ENCODE measurements at regions of chr13 and their contacts with region 1.

Region 1: DNA sequence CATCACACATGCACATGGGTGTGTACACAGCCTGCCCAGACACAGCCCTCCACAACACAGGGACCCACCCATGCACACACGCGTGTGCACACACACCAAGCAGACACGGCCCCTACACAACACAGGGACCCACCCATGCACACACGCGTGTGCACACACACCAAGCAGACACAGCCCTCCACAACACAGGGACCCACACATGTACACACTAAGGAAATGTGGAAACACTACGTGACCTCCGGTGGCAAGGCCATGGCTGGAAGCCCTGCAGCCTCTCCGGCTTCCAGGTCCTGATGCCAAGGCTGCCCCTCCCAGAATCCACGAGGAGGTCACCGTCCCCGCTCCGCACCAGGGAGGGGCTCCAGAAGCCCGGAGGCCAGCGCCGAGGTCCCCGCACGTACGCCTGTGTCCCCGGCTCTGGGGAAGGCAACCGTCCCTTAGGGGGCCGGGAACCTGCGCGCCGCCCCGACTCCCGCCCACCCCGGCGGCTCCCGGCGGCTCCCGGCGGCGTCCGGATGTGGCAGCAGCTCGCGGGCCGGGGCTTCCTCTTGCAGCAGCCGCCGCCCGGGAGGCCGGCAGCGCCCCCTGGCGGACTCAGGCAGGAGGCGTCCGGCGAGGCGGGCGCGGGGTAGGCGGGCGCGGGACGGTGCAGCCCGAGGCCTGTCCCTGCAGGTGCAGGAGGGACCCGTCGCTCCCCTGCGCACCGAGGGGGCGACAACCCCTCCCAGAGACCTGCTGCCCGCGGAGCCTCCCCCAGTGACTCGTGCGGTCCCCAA is 29.8 kb upstream of the GRTP1 start:
- DNase-seq: peak; percentile 81 to 92 (median 84)
- ATAC-seq: peak; percentile 44 to 89 (median 77)
- H3K4me3 ChIP-seq: peak overlapping the region; percentile 53 to 93 (median 80)
- H3K27ac ChIP-seq: peak overlapping the region in 11 of 12 donors; percentile 31 to 85 (median 75)
- H3K4me1 ChIP-seq: peaks cover 0 to 21% (median 9%) of the 10 kb centered on the region in 12 donors
- H3K27me3 ChIP-seq: no peaks in the 10 kb centered on the region
- CTCF ChIP-seq: peak; percentile 66 to 98 (median 90)
- POLR2A ChIP-seq: peak in 1 of 2 donors; percentile 36

Region 2: GRCh38 chr13:113029487-113030258 is 364.1 kb before region 1 on chr13:
- intact Hi-C with region 1: loop called in 4 of 10 experiments (anchors 10 kb)
- DNase-seq: no peak
- ATAC-seq: peak in 2 of 4 donors; percentile 27 to 60
- H3K4me3 ChIP-seq: no peak overlapping the region
- H3K27ac ChIP-seq: no peak overlapping the region
- H3K4me1 ChIP-seq: peaks cover 0 to 10% (median under 1%) of the 10 kb centered on the region in 12 donors
- H3K27me3 ChIP-seq: peaks cover 0 to 5% (median 0%) of the 10 kb centered on the region in 9 donors
- CTCF ChIP-seq: peak; percentile 61 to 87 (median 76)
- POLR2A ChIP-seq: no peak

Region 3: DNA sequence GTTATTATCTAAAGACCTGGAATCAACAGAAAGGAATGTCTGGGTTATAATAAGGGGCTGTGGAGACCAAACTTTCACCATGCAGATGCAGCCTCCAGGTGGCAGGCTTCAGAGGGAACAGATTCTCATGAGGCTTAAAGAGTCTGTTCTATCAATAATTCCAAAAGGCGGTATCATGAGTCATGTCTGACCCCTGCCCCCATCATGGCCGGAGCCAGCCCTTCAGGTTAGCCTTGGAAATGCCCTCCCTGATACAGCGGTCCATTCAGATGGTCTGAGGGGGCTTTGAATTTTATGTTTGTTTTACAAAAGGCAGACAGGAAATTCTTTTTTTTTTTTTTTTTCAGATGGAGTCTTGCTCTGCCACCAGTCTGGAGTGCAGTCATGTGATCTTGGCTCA is 118.4 kb before region 1 on chr13:
- intact Hi-C with region 1: loop called in 7 of 10 experiments (anchors 2 to 10 kb)
- DNase-seq: peak in 1 of 5 donors; percentile 36
- ATAC-seq: peak in 3 of 4 donors; percentile 39 to 72 (median 50)
- H3K4me3 ChIP-seq: no peak overlapping the region
- H3K27ac ChIP-seq: no peak overlapping the region
- H3K4me1 ChIP-seq: peaks cover 0 to 35% (median 0%) of the 10 kb centered on the region in 12 donors
- H3K27me3 ChIP-seq: no peaks in the 10 kb centered on the region
- CTCF ChIP-seq: peak in 10 of 12 donors; percentile 20 to 55 (median 42)
- POLR2A ChIP-seq: no peak

Region 4: DNA sequence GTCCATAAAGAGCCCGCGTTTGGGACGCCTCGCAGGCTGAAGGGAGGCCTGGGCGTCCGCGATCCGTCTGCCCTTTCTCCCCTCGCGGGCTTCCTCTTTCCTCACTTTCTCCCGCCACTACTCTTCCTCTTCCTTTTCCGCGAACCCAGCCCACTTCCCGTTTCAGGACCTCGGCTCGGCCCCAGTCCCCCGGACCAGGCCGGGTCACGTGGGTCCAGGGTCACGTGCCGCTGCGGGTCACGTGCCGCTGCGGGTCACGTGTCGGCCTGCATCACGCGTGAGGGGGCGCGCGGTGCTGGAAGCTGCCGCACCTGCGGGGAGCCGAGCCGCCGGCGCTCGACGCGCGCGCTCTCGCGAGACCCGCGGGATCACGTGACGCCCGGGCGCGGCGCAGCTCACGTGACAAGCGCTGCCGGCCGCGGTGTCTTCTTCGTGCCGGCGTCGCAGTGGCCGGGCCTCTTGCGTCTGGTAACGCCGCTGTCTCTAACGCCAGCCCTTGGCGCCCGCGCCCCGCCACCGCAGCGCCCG is 96.8 kb before region 1 on chr13 and contains the start of gene LAMP1:
- intact Hi-C with region 1: loop called in 3 of 10 experiments (anchors 5 to 10 kb)
- DNase-seq: peak; percentile 97 to 100 (median 99)
- ATAC-seq: peak; percentile 91 to 95 (median 94)
- H3K4me3 ChIP-seq: peak within 1 kb of the TSS; percentile 77 to 98 (median 88)
- H3K27ac ChIP-seq: peak within 1 kb of the TSS; percentile 53 to 95 (median 92)
- H3K4me1 ChIP-seq: peaks cover 0 to 53% (median 23%) of the 10 kb centered on the region in 12 donors
- H3K27me3 ChIP-seq: peaks cover 0 to 3% (median 0%) of the 10 kb centered on the region in 9 donors
- CTCF ChIP-seq: peak in 1 of 12 donors; percentile 12
- POLR2A ChIP-seq: peak in 1 of 2 donors; percentile 74
- total RNA-seq, gene LAMP1: 77.5 to 214 (median 101) TPM

Region 5: DNA sequence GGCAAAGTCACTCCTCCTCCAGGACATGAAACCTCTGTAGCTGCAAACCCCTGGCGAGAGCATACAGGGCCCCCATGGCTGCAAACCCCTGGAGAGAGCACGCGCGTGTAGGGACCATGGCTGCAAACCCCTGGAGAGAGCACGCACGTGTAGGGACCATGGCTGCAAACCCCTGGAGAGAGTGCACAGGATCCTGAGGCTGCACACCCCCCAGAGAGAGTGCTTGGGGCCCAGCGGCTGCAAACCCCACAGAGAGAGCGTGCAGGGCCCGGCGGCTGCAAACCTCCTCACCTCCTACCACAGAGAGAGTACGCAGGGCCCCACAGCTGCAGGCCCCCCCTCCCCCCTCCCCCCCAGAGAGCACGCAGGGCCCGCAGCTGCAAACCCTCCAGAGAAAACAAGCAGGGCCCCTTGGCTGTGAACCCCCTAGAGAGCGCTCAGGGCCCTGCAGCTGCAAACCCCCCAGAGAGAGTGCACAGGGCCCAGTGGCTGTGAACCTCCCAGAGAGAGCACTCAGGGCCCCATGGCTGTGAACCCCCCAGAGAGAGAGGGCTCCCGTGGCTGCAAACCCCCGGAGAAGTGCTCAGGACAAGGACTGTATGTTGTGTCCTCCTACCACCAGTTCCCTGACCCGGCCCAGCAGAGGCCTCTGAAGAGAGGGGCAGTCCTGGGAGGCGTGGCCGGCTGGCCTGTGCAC is 52.2 kb after region 1 on chr13:
- intact Hi-C with region 1: no loop called
- DNase-seq: peak in 1 of 5 donors; percentile 24
- ATAC-seq: peak in 1 of 4 donors; percentile 7
- H3K4me3 ChIP-seq: no peak overlapping the region
- H3K27ac ChIP-seq: peak overlapping the region in 4 of 12 donors; percentile 8 to 39 (median 25)
- H3K4me1 ChIP-seq: peaks cover 3 to 57% (median 31%) of the 10 kb centered on the region in 12 donors
- H3K27me3 ChIP-seq: no peaks in the 10 kb centered on the region
- CTCF ChIP-seq: no peak
- POLR2A ChIP-seq: no peak